ENCODE measurements at regions of chr1 and their contacts with region 1.

Region 1: GRCh38 chr1:38512789-38513188 is 346.8 kb downstream of the RRAGC start:
- DNase-seq: no peak
- ATAC-seq: no peak
- H3K4me3 ChIP-seq: no peak overlapping the region
- H3K27ac ChIP-seq: no peak overlapping the region
- H3K4me1 ChIP-seq: no peaks in the 10 kb centered on the region
- H3K27me3 ChIP-seq: no peaks in the 10 kb centered on the region; a peak in 1 of 4 replicates
- CTCF ChIP-seq: no peak
- EP300 ChIP-seq: no peak
- POLR2A ChIP-seq: no peak
- RAD21 ChIP-seq: no peak

Region 2: DNA sequence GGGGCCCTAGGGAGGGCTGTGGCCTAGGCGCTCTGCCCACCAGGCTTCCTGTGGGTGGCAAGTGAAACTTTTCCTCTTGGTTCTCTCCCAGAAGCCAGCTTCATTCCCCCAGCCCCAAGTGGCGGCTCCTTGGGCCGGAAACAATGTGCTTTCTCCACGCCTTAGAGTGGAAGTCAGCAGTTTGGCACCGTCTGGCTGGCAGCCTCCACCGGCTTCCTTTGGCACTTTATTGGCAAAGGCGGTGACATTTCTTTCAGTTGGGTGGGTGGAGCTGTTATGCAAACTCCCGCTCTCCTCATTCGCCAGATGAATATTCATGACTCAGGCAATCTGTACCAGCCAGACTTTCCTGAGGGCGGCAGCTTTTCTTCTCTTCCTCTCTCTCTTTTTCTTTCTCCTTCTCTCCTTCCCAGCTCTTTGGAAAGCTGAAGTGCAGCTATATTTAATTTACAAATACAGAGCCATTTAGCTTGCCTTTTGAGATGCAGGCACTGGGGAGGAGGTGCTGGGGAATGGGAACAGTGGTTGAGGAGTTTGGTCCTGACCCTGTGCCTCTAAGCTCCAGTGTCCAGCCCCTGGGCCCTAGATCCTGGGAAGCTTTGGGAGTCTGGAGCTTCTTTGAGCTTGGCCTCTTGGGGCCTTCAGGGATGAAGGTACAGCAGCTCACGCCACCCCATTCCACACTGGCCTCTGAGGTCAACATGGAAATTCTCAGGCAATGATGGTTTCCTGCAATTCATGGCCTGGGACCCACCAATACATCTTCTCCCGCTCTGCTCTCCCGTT is 398.4 kb before region 1 on chr1:
- CTCF ChIA-PET with region 1: no interaction called
- POLR2A ChIA-PET with region 1: no interaction called
- RAD21 ChIA-PET with region 1: no interaction called
- SMC1A ChIA-PET with region 1: no interaction called
- in situ Hi-C with region 1: no loop called
- intact Hi-C with region 1: no loop called
- DNase-seq: no peak
- ATAC-seq: no peak
- H3K4me3 ChIP-seq: no peak overlapping the region
- H3K27ac ChIP-seq: no peak overlapping the region
- H3K4me1 ChIP-seq: no peaks in the 10 kb centered on the region
- H3K27me3 ChIP-seq: no peaks in the 10 kb centered on the region
- CTCF ChIP-seq: no peak
- EP300 ChIP-seq: no peak
- POLR2A ChIP-seq: no peak
- RAD21 ChIP-seq: no peak

Region 3: GRCh38 chr1:38500352-38500751 is 12.4 kb before region 1 on chr1:
- CTCF ChIA-PET with region 1: interaction called, 3 read pairs
- POLR2A ChIA-PET with region 1: no interaction called
- RAD21 ChIA-PET with region 1: no interaction called
- SMC1A ChIA-PET with region 1: interaction called, 12 read pairs
- in situ Hi-C with region 1: no loop called
- intact Hi-C with region 1: no loop called
- DNase-seq: no peak
- ATAC-seq: peak; percentile 57; the same call in 2 of the 3 replicates
- H3K4me3 ChIP-seq: no peak overlapping the region
- H3K27ac ChIP-seq: no peak overlapping the region
- H3K4me1 ChIP-seq: peaks cover 4% of the 10 kb centered on the region
- H3K27me3 ChIP-seq: no peaks in the 10 kb centered on the region; a peak in 1 of 4 replicates
- CTCF ChIP-seq: peak in 2 of 3 experiments; percentile 53 to 58; a peak in 4 of 6 replicates
- EP300 ChIP-seq: no peak
- POLR2A ChIP-seq: no peak
- RAD21 ChIP-seq: peak; percentile 32

Region 4: GRCh38 chr1:38527373-38527966 is 14.7 kb after region 1 on chr1:
- CTCF ChIA-PET with region 1: interaction called, 4 read pairs
- POLR2A ChIA-PET with region 1: no interaction called
- RAD21 ChIA-PET with region 1: interaction called, 3 read pairs
- SMC1A ChIA-PET with region 1: interaction called, 12 read pairs
- in situ Hi-C with region 1: no loop called
- intact Hi-C with region 1: no loop called
- DNase-seq: peak; percentile 83
- ATAC-seq: peak; percentile 99
- H3K4me3 ChIP-seq: no peak overlapping the region
- H3K27ac ChIP-seq: peak overlapping the region; percentile 57
- H3K4me1 ChIP-seq: peaks cover 13% of the 10 kb centered on the region
- H3K27me3 ChIP-seq: no peaks in the 10 kb centered on the region
- CTCF ChIP-seq: peak in 1 of 3 experiments; percentile 21; a peak in 1 of 6 replicates
- EP300 ChIP-seq: no peak; a peak in 1 of 4 replicates
- POLR2A ChIP-seq: no peak
- RAD21 ChIP-seq: no peak

Measured in GM12878 (cell line).